Left cardiac atrium (tissue), 4 donors: ENCODE measurements at regions of chr17 and their contacts with region 1.

Region 1: DNA sequence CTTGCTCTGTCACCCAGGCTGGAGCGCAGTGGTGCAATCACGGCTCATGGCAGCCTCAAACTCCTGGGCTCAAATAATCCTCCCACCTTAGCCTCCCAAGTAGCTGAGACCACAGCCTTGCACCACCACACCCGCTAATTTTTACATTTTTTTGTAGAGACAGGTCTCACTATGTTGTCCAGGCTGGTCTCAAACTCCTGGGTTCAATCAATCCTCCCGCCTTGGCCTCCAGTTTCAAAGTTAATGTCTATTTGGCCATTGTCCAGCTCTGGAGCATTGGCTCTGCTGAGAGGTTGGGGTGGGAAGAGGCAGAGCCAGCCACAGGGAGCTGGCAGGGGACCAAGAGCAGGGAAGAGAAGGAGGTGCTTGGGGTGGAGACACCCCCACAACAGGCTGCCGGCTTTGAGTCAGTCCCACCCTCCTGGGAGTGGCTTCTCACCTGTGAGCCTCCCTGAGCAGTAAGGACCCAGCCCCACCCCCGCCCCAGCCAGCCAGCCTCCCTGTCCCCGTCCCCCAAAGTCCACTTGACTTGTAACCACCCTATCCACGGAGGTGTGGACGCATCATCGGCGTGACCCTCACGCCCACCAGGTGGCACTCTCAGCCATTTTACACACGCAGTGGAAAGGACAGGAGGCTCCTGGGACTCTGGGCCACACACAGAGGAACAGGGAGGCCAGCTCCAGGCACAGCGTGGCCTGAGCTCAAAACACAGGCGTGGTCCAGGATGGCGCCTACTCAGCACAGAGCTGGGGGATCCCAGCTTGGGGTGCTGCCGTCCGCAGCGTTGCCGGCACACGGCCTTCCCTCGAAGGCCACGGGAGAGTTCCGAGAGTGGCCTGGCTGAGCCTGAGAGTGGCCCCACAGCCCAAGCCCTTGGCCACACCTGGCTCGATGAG is 22.8 kb upstream of the PVALEF start:
- DNase-seq: peak; percentile 86
- ATAC-seq: peak; percentile 92 to 96

Region 2: GRCh38 chr17:81200695-81201580 is 58.4 kb after region 1 on chr17:
- intact Hi-C with region 1: loop called (anchors 5 to 10 kb)
- DNase-seq: peak; percentile 59
- ATAC-seq: peak; percentile 63 to 74

Region 3: DNA sequence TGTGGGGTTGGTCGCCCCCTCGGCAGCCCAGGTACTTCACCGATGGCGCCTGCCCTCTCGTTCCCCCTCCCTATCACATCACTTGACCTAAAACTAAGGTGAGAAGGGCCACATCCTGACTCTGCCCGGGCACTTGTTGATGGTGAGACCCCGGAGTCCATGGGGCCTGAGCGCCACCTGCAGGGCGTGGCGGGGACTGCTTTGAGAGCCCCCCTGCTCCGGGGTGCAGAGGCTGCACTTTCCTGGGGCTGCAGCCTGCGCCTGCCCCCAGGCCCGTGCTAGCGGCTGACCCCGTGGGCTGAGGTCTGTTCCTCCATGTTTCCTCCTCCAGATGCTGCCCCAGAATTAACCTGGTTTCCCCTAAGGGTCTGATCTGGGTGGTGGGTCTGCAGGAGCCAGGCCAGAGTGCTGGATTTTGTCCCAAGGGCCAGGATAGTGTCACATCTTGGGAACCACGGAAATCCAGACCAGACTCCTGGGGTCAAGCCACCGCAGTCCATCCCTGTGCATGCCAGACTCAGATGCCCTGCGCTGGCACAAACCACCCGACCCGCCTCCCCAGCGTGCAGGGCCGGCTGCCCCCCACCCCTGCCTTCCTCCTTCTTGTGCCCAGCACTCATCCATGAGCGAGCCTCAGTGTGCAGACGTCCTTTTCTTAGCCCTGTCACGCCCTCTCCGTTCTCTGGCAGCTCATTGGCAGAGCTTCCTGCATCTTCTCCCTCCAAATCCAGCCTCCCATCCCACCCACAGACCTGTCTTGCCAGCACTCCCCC is 99.3 kb after region 1 on chr17:
- intact Hi-C with region 1: loop called (anchors 2 to 5 kb)
- DNase-seq: no peak
- ATAC-seq: no peak